ENCODE measurements at regions of chr1 and their contacts with region 1.

Region 1: GRCh38 chr1:163589735-163590134 is 268.0 kb downstream of the NUF2 start:
- DNase-seq: peak; percentile 98
- H3K4me3 ChIP-seq: no peak overlapping the region
- H3K27ac ChIP-seq: peak overlapping the region; percentile 98
- H3K4me1 ChIP-seq: peaks cover 59% of the 10 kb centered on the region
- H3K27me3 ChIP-seq: no peaks in the 10 kb centered on the region
- CTCF ChIP-seq: no peak

Region 2: GRCh38 chr1:163361123-163361934 is 228.4 kb before region 1 on chr1:
- CTCF ChIA-PET with region 1: no interaction called
- POLR2A ChIA-PET with region 1: no interaction called
- intact Hi-C with region 1: loop called (anchors 1 kb)
- DNase-seq: peak; percentile 58
- H3K4me3 ChIP-seq: no peak overlapping the region
- H3K27ac ChIP-seq: no peak overlapping the region
- H3K4me1 ChIP-seq: peaks cover 8% of the 10 kb centered on the region
- H3K27me3 ChIP-seq: no peaks in the 10 kb centered on the region
- CTCF ChIP-seq: peak; percentile 71

Region 3: GRCh38 chr1:163561580-163562295 is 28.0 kb before region 1 on chr1:
- CTCF ChIA-PET with region 1: interaction called, 7 read pairs
- POLR2A ChIA-PET with region 1: no interaction called
- intact Hi-C with region 1: loop called (anchors 1 kb)
- DNase-seq: peak; percentile 85
- H3K4me3 ChIP-seq: no peak overlapping the region
- H3K27ac ChIP-seq: peak overlapping the region; percentile 85
- H3K4me1 ChIP-seq: peaks cover 68% of the 10 kb centered on the region
- H3K27me3 ChIP-seq: no peaks in the 10 kb centered on the region
- CTCF ChIP-seq: peak; percentile 80

Region 4: DNA sequence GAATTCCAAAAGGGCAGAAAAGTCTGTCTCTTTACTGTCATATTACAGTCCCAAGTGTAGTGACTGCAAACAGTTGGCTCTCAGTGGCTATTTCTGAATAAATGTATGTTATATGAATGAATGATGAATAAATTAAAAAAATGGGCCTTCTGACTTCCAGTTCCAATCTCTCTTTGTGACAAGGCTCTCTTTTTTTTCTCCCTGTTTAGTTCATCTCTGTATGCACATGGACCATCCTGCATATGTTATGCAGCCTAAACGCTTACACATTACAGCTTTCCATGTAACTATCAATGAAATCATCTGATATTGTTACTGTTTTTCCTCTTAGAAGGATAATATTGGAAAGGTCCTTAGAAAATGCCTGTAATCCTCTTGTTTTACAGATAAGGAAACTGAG is 95.0 kb after region 1 on chr1:
- CTCF ChIA-PET with region 1: no interaction called
- POLR2A ChIA-PET with region 1: no interaction called
- intact Hi-C with region 1: no loop called
- DNase-seq: no peak
- H3K4me3 ChIP-seq: no peak overlapping the region
- H3K27ac ChIP-seq: no peak overlapping the region
- H3K4me1 ChIP-seq: no peaks in the 10 kb centered on the region
- H3K27me3 ChIP-seq: no peaks in the 10 kb centered on the region
- CTCF ChIP-seq: no peak

Region 5: DNA sequence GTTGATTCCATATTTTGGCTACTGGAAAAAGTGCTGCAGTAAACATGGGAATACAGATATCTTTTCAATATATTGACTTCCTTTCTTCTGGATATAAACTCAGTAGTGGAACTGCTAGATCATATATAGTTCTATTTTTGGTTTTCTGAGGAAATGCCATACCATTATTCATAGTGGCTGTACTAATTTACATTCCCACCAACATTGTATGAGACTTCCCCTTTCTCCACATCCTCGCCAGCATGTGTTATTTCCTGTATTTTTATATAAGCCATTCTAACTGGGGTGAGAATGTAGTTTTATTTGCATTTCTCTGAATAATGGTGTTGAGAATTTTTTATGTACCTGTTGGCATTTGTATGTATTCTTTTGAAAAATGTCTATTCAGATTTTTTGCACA is 117.2 kb after region 1 on chr1:
- CTCF ChIA-PET with region 1: no interaction called
- POLR2A ChIA-PET with region 1: interaction called, 4 read pairs
- intact Hi-C with region 1: loop called (anchors 1 kb)
- DNase-seq: peak; percentile 85
- H3K4me3 ChIP-seq: no peak overlapping the region
- H3K27ac ChIP-seq: peak overlapping the region; percentile 79
- H3K4me1 ChIP-seq: peaks cover 46% of the 10 kb centered on the region
- H3K27me3 ChIP-seq: no peaks in the 10 kb centered on the region
- CTCF ChIP-seq: no peak

Region 6: DNA sequence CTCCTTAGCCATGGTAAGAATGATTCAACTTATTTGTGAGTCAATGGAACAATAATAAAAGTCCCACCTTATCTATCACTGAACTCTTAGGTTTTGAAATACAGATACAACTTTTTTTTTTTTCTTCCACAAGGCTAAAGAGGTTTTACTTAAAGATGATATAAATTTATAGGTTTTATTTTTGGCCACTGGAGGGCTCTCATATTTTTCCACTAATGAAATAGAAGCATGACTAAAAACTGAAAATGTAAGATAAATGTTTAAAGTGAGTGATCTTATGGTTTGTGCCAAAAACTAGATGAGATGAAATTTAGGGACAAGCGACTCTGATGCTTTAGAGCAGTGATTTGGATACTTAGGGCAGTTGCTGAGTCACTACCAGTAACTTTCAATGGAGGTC is 231.0 kb after region 1 on chr1:
- CTCF ChIA-PET with region 1: no interaction called
- POLR2A ChIA-PET with region 1: no interaction called
- intact Hi-C with region 1: no loop called
- DNase-seq: peak; percentile 35
- H3K4me3 ChIP-seq: no peak overlapping the region
- H3K27ac ChIP-seq: no peak overlapping the region
- H3K4me1 ChIP-seq: peaks cover 12% of the 10 kb centered on the region
- H3K27me3 ChIP-seq: no peaks in the 10 kb centered on the region
- CTCF ChIP-seq: peak; percentile 57

Measured in A673 (cell line).